Activated CD4-positive, alpha-beta T cell treated with anti-CD3 and anti-CD28 coated beads, Interleukin-2, amount 10 ng/mL, durations not matched to agents 7 days and 5 days (primary cell): ENCODE measurements at regions of chr22 and their contacts with region 1.

Region 1: GRCh38 chr22:31144233-31144632 is 3.9 kb upstream of the PLA2G3 start:
- DNase-seq: no peak
- H3K4me3 Mint-ChIP-seq: no peak overlapping the region
- H3K27ac Mint-ChIP-seq: no peak overlapping the region
- H3K4me1 Mint-ChIP-seq: peaks cover 11% of the 10 kb centered on the region
- H3K27me3 Mint-ChIP-seq: peaks cover 2% of the 10 kb centered on the region

Region 2: DNA sequence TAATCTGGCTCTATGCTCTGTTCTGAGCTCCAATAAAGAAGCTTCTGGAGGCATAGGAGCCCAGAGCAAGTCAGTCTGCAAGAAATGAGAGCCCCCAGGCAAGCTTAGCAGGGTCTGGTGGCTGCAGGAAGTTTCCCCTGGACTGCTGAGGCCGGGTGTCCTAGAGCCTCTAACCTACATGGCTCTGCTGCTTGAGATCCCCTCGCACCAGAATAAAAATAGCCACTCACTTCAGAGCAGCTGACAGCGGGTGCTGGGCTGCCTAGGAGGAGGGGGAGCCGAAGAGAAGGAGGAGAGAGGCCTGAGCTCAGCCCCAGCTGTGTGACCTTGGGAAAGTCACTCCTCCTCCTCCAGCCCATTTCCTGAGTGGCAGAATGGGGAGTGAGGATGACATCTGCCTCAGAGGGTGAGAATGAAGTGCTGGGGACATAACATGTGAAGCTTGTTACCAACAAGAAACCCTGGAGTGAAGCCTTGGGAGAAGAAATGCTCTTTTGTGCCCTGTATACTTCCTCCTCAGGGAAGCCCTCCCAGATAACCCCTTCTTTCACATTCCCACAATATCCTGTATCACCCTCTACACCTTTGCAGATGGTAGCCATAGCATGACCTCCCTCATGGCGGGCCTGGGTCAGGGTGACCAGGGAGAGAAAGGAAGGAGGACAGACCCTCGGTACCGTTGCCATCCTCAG is 25.1 kb before region 1 on chr22:
- CTCF ChIA-PET with region 1: no interaction called
- POLR2A ChIA-PET with region 1: interaction called, 11 read pairs
- DNase-seq: no peak
- H3K4me3 Mint-ChIP-seq: no peak overlapping the region
- H3K27ac Mint-ChIP-seq: no peak overlapping the region
- H3K4me1 Mint-ChIP-seq: no peaks in the 10 kb centered on the region
- H3K27me3 Mint-ChIP-seq: no peaks in the 10 kb centered on the region

Region 3: DNA sequence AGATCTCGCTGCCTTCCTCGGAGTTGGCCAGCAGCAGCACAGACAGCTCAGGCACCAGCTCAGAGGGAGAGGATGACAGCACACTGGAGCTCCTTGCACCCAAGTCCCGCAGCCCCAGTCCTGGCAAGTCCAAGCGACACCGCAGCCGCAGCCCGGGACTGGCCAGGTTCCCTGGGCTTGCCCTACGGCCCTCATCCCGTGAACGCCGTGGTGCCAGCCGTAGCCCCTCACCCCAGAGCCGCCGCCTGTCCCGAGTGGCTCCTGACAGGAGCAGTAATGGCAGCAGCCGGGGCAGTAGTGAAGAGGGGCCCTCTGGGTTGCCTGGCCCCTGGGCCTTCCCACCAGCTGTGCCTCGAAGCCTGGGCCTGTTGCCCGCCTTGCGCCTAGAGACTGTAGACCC is 10.3 kb before region 1 on chr22:
- CTCF ChIA-PET with region 1: no interaction called
- POLR2A ChIA-PET with region 1: no interaction called
- DNase-seq: no peak
- H3K4me3 Mint-ChIP-seq: no peak overlapping the region
- H3K27ac Mint-ChIP-seq: no peak overlapping the region
- H3K4me1 Mint-ChIP-seq: no peaks in the 10 kb centered on the region
- H3K27me3 Mint-ChIP-seq: no peaks in the 10 kb centered on the region

Region 4: GRCh38 chr22:31461699-31462098 is 317.5 kb after region 1 on chr22:
- CTCF ChIA-PET with region 1: no interaction called
- POLR2A ChIA-PET with region 1: no interaction called
- DNase-seq: no peak
- H3K4me3 Mint-ChIP-seq: no peak overlapping the region
- H3K27ac Mint-ChIP-seq: no peak overlapping the region
- H3K4me1 Mint-ChIP-seq: peaks cover 1% of the 10 kb centered on the region
- H3K27me3 Mint-ChIP-seq: no peaks in the 10 kb centered on the region